ENCODE measurements at regions of chr5 and their contacts with region 1.

Region 1: GRCh38 chr5:139256820-139257219 is 36.7 kb upstream of the MATR3 start:
- DNase-seq: no peak
- ATAC-seq: no peak
- H3K4me3 ChIP-seq: no peak overlapping the region
- H3K27ac ChIP-seq: no peak overlapping the region
- H3K4me1 ChIP-seq: no peaks in the 10 kb centered on the region
- H3K27me3 ChIP-seq: no peaks in the 10 kb centered on the region
- CTCF ChIP-seq: no peak
- POLR2A ChIP-seq: no peak

Region 2: GRCh38 chr5:138641547-138642298 is 615.1 kb before region 1 on chr5:
- in situ Hi-C with region 1: loop called in 1 of 4 experiments (anchors 5 kb)
- intact Hi-C with region 1: loop called (anchors 1 kb)
- DNase-seq: peak; percentile 15 to 44
- ATAC-seq: peak; percentile 65 to 91
- H3K4me3 ChIP-seq: no peak overlapping the region
- H3K27ac ChIP-seq: no peak overlapping the region
- H3K4me1 ChIP-seq: no peaks in the 10 kb centered on the region
- H3K27me3 ChIP-seq: no peaks in the 10 kb centered on the region
- CTCF ChIP-seq: peak; percentile 43 to 66 (median 62)
- POLR2A ChIP-seq: no peak

Region 3: DNA sequence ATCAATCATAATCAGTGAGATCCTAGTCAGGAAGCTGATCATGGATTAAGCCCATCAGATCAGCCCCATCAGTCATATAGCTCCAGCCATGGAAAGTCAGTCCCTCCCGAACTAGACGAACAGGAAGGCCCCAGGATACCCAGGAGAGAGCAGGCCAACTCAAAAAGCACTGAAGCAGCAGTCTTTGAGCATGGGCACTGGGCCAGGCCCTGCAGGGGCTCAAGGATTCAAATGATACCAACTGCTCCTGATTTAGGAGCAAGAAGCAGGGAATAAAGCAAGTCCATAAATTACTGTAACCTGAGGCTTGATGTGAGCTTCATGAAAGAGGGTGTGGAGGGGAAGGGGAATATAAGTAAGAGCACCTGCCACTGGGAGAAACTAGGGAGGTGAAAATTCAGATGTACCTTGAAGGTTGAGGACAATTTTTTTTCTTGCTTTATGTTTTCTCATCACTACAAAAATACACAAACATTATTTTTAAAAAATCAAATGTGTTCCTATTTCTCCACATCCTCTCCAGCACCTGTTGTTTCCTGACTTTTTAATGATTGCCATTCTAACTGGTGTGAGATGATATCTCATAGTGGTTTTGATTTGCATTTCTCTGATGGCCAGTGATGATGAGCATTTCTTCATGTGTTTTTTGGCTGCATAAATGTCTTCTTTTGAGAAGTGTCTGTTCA is 173.9 kb before region 1 on chr5:
- in situ Hi-C with region 1: no loop called
- intact Hi-C with region 1: no loop called
- DNase-seq: no peak
- ATAC-seq: no peak
- H3K4me3 ChIP-seq: no peak overlapping the region
- H3K27ac ChIP-seq: no peak overlapping the region
- H3K4me1 ChIP-seq: peaks cover 3 to 4% of the 10 kb centered on the region in 2 donors
- H3K27me3 ChIP-seq: no peaks in the 10 kb centered on the region
- CTCF ChIP-seq: no peak
- POLR2A ChIP-seq: no peak

Measured in gastrocnemius medialis (tissue), 4 donors.